ENCODE measurements at regions of chr13 and their contacts with region 1.

Region 1: GRCh38 chr13:102460801-102461200 is 59.0 kb upstream of the FGF14 start:
- DNase-seq: no peak
- ATAC-seq: no peak
- H3K4me3 ChIP-seq: no peak overlapping the region
- H3K27ac ChIP-seq: no peak overlapping the region
- H3K4me1 ChIP-seq: no peaks in the 10 kb centered on the region
- H3K27me3 ChIP-seq: no peaks in the 10 kb centered on the region
- CTCF ChIP-seq: no peak

Region 2: GRCh38 chr13:101624210-101624922 is 836.4 kb before region 1 on chr13:
- intact Hi-C with region 1: no loop called
- DNase-seq: peak in 1 of 4 donors; percentile 21
- ATAC-seq: peak; percentile 64
- H3K4me3 ChIP-seq: no peak overlapping the region
- H3K27ac ChIP-seq: peak overlapping the region; percentile 45 to 61
- H3K4me1 ChIP-seq: peaks cover 7 to 10% of the 10 kb centered on the region in 2 donors
- H3K27me3 ChIP-seq: no peaks in the 10 kb centered on the region
- CTCF ChIP-seq: no peak

Region 3: DNA sequence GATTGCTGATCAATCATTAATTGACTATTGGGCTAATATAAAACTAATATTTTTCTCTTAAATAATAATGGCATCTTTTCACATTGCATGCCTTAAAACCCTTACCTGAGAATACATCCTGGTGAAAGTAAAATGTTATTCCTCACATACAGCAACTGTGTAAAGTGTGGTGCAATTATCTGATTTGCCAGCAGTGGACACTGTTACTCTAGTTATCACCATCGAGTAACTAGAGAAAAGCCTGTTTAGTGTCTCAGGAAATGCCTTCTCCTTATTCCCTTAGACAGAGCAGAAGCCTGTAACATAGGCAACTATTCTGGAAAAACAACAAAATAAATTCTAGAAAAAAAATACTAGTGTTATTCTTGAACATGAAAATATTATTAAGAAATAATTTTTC is 518.8 kb before region 1 on chr13:
- intact Hi-C with region 1: loop called in 1 of 2 experiments (anchors 5 kb)
- DNase-seq: peak in 1 of 4 donors; percentile 16
- ATAC-seq: peak; percentile 84
- H3K4me3 ChIP-seq: no peak overlapping the region
- H3K27ac ChIP-seq: no peak overlapping the region
- H3K4me1 ChIP-seq: no peaks in the 10 kb centered on the region
- H3K27me3 ChIP-seq: no peaks in the 10 kb centered on the region
- CTCF ChIP-seq: peak in 1 of 2 donors; percentile 49

Region 4: GRCh38 chr13:102620516-102620915 is 159.7 kb after region 1 on chr13:
- intact Hi-C with region 1: no loop called
- DNase-seq: no peak
- ATAC-seq: no peak
- H3K4me3 ChIP-seq: no peak overlapping the region
- H3K27ac ChIP-seq: no peak overlapping the region
- H3K4me1 ChIP-seq: no peaks in the 10 kb centered on the region
- H3K27me3 ChIP-seq: no peaks in the 10 kb centered on the region
- CTCF ChIP-seq: no peak

Measured in left lung (tissue), 14 donors.